Pancreas (tissue), 10 donors: ENCODE measurements at regions of chr15 and their contacts with region 1.

Region 1: DNA sequence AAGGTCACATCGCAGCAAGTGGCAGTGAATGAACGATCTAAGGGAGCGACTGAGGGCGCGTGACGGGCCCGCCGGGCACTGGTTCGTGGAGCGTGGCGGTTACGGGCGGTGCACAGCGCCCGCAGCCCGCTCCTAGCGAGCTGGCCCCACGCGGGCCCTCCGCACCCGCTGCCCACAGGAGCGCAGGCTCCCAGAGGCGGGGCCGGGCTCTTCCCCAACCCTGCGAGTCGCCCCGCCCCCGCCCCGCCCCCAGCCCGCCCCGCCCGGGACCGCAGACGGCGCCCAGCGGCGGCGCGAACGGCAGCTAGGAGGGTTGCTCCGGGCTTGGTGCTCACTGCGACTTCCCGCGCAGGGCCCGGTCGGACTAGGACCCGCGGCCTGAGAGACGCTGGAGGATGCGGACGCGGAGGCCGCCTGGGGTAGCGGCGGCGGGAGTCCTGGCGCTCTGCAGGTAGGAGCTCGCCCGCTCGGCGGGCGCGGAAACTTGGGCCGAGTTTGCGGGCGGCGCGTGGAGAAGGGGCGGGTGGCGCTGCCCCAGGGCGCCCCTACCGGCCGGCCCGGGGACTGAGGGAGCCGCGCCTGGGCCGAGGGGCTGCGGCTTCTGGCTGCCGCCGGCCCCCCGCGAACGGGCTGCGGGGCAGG is at the start of gene C15orf39:
- DNase-seq: peak; percentile 71 to 90 (median 79)
- ATAC-seq: peak; percentile 73 to 81 (median 77)
- H3K4me3 ChIP-seq: peak within 1 kb of the TSS; percentile 90 to 99 (median 94)
- H3K27ac ChIP-seq: peak within 1 kb of the TSS; percentile 87 to 96 (median 92)
- H3K4me1 ChIP-seq: peaks cover 5 to 18% (median 16%) of the 10 kb centered on the region in 3 donors
- H3K27me3 ChIP-seq: no peaks in the 10 kb centered on the region
- CTCF ChIP-seq: peak; percentile 95 to 97 (median 96)
- total RNA-seq, gene C15orf39: 8.2 to 27.4 (median 16.3) TPM

Region 2: GRCh38 chr15:74956648-74957300 is 245.0 kb before region 1 on chr15 and contains the start of gene RPP25:
- intact Hi-C with region 1: loop called in 1 of 3 experiments (anchors 10 kb)
- DNase-seq: peak; percentile 79 to 92 (median 86)
- ATAC-seq: peak; percentile 83 to 89 (median 86)
- H3K4me3 ChIP-seq: peak within 1 kb of the TSS; percentile 59 to 80 (median 70)
- H3K27ac ChIP-seq: peak within 1 kb of the TSS; percentile 65 to 91 (median 79)
- H3K4me1 ChIP-seq: peaks cover 5 to 16% (median 12%) of the 10 kb centered on the region in 3 donors
- H3K27me3 ChIP-seq: no peaks in the 10 kb centered on the region
- CTCF ChIP-seq: no peak
- total RNA-seq, gene RPP25: 3.0 to 6.7 (median 4.0) TPM

Region 3: DNA sequence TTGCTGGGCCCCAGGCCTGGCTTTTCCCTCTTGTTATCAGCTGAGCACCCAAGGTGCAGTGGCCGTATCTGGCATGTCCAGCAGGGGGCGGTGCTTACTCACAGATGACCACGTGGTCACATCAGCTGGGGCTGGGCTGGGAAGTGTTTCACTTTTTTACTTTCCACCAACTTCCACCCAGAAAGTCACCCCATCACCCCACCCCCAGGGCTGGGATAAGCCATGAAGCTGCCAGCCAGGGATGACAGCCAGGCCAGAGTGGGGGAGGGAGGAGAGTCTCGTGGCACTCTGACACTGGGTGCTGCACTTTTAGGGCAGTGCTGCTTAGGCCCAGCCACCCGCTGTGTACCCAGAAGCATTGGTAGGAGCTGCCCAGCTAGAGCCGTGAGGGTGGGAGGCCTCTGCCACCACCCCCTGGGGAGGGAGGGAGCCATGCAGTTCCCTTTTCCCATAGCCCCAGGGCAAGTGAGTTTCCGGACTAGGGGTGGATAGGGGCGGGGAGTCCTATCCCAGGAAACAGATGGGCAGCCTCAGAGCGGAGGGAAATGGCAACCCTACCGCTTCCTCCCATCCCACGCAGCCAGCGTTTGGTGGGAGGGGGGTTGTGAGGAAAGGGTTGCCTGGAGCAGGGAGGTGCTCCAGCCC is 172.2 kb before region 1 on chr15:
- intact Hi-C with region 1: loop called (anchors 2 to 10 kb)
- DNase-seq: peak; percentile 78 to 98 (median 93)
- ATAC-seq: peak; percentile 84 to 94 (median 92)
- H3K4me3 ChIP-seq: no peak overlapping the region
- H3K27ac ChIP-seq: peak overlapping the region in 1 of 4 donors; percentile 36
- H3K4me1 ChIP-seq: peaks cover 0 to 13% (median 0%) of the 10 kb centered on the region in 3 donors
- H3K27me3 ChIP-seq: no peaks in the 10 kb centered on the region
- CTCF ChIP-seq: peak; percentile 88 to 95 (median 91)

Region 4: GRCh38 chr15:75042730-75043508 is 158.8 kb before region 1 on chr15:
- intact Hi-C with region 1: loop called in 2 of 3 experiments (anchors 5 to 10 kb)
- DNase-seq: peak; percentile 83 to 91 (median 85)
- ATAC-seq: peak; percentile 73 to 83 (median 78)
- H3K4me3 ChIP-seq: peak overlapping the region in 1 of 4 donors; percentile 26
- H3K27ac ChIP-seq: peak overlapping the region; percentile 81 to 93 (median 86)
- H3K4me1 ChIP-seq: peaks cover 35 to 53% (median 42%) of the 10 kb centered on the region in 3 donors
- H3K27me3 ChIP-seq: no peaks in the 10 kb centered on the region
- CTCF ChIP-seq: peak; percentile 33 to 43 (median 40)